ENCODE measurements at regions of chr17 and their contacts with region 1.

Region 1: GRCh38 chr17:48113201-48113676 is 5.7 kb downstream of the SNX11 start:
- DNase-seq: peak; percentile 81
- ATAC-seq: peak; percentile 93
- H3K4me3 Mint-ChIP-seq: peak overlapping the region; percentile 32
- H3K27ac Mint-ChIP-seq: peak overlapping the region; percentile 96
- H3K4me1 Mint-ChIP-seq: peaks cover 46% of the 10 kb centered on the region
- H3K27me3 Mint-ChIP-seq: no peaks in the 10 kb centered on the region

Region 2: GRCh38 chr17:48101012-48101720 is 12.1 kb before region 1 on chr17 and contains the start of gene CBX1:
- CTCF ChIA-PET with region 1: interaction called, 30 read pairs
- POLR2A ChIA-PET with region 1: interaction called, 14 read pairs
- DNase-seq: peak; percentile 96
- ATAC-seq: peak; percentile 96
- H3K4me3 Mint-ChIP-seq: peak within 1 kb of the TSS; percentile 99
- H3K27ac Mint-ChIP-seq: peak within 1 kb of the TSS; percentile 88
- H3K4me1 Mint-ChIP-seq: peaks cover 52% of the 10 kb centered on the region
- H3K27me3 Mint-ChIP-seq: no peaks in the 10 kb centered on the region
- total RNA-seq, gene CBX1: 68.2 to 70.3 TPM

Region 3: DNA sequence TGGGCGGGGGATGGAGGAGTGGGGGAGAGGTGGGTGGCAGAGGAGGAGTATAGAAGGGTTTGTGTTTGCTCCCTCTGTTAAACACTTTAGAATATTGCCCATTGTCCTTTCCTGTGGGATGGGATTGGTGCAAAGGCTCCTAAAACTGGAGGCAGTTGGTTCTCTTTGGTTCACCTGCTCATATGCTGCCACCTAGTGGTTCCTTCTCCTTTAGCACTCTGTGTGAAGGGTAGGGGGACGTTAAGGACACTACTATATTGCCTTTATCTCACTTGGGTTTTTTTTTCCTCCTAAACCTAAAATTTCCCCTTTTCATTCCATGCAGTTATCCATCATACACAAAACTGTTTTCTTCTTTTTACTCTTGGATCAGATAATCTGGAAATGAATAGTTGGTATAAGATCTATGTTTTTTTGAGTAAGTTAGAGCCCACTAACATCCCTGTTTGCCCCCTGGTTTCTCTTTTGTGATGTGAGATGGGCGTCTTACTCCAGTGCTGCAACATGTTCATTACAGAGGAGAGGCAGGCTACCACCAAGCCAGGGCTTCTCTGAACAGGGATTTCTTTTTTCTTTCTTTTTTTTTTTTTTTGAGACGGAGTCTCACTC is 18.1 kb after region 1 on chr17:
- CTCF ChIA-PET with region 1: interaction called, 10 read pairs
- POLR2A ChIA-PET with region 1: no interaction called
- DNase-seq: peak; percentile 70
- ATAC-seq: peak; percentile 80
- H3K4me3 Mint-ChIP-seq: no peak overlapping the region
- H3K27ac Mint-ChIP-seq: peak overlapping the region; percentile 39
- H3K4me1 Mint-ChIP-seq: peaks cover 5% of the 10 kb centered on the region
- H3K27me3 Mint-ChIP-seq: no peaks in the 10 kb centered on the region

Region 4: DNA sequence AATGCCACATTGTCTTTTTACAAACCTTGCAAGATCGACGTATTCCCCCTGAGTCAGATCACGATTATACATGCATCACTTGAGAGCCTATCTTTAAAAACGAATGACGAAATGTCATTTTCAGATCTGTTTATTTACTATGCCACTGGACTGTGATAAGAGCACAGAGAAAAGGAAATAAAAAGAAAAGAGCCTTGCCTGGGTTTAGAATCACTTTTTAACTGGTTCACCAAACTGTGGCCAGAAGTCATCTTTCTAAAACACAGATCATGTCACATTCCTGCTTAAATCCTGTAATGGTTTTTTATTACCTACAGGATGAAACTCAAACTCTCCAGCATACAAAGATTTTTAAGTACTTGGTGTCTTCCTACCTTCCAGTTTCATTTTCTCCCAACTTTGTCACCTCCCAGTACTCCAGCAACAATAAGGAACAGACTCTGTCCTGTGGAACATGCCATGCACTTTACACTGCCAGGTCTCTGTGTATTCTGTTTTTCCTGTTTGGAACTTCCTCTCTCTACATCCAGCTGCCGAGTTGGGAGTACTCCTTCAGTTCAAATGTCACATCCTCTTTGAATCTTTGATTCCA is 85.8 kb after region 1 on chr17:
- CTCF ChIA-PET with region 1: no interaction called
- POLR2A ChIA-PET with region 1: no interaction called
- DNase-seq: no peak
- ATAC-seq: no peak
- H3K4me3 Mint-ChIP-seq: no peak overlapping the region
- H3K27ac Mint-ChIP-seq: peak overlapping the region; percentile 9
- H3K4me1 Mint-ChIP-seq: peaks cover 40% of the 10 kb centered on the region
- H3K27me3 Mint-ChIP-seq: no peaks in the 10 kb centered on the region

Measured in activated CD8-positive, alpha-beta T cell treated with anti-CD3 and anti-CD28 coated beads, Interleukin-2, amount 10 ng/mL, durations not matched to agents 7 days and 5 days (primary cell).